ENCODE measurements at regions of chr12 and their contacts with region 1.

Region 1: DNA sequence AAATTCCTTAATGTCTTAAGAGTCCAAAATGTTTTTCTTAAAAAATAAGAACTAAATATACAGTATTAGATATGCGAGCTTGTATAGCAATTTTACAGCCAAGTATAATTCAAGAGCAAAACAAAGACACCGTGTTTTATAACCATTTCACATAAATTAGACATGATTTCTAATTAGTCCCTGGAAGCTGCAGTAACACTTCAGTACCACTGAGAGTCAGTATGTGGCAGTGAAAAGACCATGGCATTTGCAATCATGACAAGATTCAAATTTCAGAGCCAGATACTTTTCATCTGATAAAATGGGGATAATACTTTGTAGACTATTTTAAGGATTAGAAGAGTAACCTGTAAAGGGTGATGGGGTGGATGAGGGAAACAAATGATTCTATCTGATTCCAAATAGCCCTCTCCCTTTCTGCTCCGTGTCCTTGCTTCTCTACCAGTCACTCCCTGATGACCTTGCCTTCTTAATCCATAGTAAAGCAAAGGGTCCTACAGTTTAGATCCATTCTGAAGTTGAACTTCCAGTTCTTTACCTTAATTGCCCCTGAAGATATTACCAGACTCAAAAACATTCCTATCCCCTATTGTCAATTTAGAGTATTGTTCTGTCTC is 145.4 kb upstream of the ABCD2 start:
- DNase-seq: peak in 2 of 42 donors; percentile 20 to 38

Region 2: GRCh38 chr12:39807043-39807442 is 42.0 kb after region 1 on chr12:
- intact Hi-C with region 1: no loop called
- DNase-seq: no peak

Region 3: DNA sequence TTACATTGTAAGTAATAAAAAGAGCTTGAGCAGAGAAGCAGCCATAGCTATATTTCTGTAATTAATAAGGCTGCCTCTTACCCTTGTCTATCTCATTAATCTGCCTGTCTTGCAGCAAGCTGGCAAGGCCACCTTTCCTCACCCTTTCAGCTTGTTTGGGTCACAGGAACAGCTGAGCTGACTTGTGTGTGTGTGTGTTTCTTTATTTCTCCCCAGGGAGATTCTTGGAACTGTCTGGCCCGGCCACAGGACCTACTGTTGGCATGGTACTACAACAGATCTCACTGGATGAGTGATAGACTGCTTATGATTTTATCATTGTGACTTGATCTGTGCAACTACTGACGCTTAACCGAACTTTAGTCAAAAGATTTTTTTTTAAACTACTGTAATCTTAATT is 127.1 kb after region 1 on chr12:
- intact Hi-C with region 1: no loop called
- DNase-seq: no peak

Region 4: GRCh38 chr12:39986674-39987073 is 221.6 kb after region 1 on chr12:
- intact Hi-C with region 1: loop called (anchors 10 kb)
- DNase-seq: no peak

Region 5: DNA sequence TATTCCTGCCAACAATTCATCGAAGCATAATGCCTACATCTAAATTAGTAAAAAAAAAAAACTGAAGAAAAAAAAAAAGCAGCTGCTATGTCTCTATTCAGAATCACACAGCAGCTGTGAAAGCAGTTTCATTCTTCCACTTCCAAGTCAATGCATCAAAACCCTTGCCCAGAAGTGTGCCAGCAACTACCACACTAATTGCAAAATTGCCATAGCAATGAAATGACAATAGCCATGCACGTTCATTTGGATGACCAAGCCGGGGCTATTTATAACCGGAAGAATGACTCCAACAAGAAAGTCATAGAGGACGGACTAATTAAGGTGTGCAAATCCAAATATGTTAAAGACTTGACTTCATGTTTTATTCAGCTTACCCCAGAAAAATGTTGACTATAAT is 298.4 kb after region 1 on chr12:
- intact Hi-C with region 1: no loop called
- DNase-seq: peak in 11 of 42 donors; percentile 2 to 53 (median 11)